PC-3 (cell line): ENCODE measurements at regions of chr2 and their contacts with region 1.

Region 1: DNA sequence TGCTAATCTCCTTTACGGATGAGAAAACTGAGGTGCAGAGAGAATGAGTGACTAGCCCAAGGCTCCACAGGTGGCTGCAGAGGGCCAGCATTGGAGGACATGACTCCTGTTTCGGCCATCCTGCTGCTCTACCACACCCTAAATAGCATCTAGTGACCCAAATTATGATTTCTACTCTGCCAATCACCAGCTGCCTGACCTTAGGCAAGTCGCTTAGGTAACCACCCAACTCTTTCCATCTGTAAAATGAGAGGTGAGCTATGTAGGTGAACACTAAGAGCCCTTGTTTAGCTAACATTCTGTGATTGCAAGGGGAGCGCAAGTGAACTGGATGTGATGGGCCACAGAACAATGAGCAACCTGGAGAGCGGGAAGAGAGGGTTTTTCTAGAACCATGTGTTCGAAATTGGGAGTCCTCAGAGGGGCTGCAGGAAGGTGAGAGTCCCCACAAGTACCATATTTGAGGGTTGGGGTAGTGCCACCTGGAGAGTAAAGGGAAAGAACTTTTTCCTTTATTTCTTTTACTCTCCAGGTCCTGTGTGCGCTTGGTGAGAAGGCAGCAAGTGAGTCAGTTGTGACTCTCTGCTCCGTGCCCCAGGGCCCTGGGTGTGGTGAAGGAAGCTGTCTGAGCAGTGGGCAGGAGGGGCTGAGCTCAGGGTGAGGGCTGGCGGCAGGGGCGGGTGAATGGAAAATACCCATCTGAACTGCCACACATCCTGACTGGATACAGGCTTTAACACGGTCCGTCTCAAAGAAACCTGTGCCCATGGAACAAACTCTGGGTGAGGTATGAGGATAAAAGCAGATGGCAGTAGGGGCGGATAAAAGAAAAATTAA is 2.4 kb downstream of the CYP27C1 start:
- DNase-seq: peak; percentile 95
- ATAC-seq: peak; percentile 96
- H3K4me3 ChIP-seq: peak overlapping the region; percentile 69
- H3K27ac ChIP-seq: peak overlapping the region; percentile 99
- H3K4me1 ChIP-seq: peaks cover 32% of the 10 kb centered on the region
- H3K27me3 ChIP-seq: no peaks in the 10 kb centered on the region
- CTCF ChIP-seq: no peak

Region 2: DNA sequence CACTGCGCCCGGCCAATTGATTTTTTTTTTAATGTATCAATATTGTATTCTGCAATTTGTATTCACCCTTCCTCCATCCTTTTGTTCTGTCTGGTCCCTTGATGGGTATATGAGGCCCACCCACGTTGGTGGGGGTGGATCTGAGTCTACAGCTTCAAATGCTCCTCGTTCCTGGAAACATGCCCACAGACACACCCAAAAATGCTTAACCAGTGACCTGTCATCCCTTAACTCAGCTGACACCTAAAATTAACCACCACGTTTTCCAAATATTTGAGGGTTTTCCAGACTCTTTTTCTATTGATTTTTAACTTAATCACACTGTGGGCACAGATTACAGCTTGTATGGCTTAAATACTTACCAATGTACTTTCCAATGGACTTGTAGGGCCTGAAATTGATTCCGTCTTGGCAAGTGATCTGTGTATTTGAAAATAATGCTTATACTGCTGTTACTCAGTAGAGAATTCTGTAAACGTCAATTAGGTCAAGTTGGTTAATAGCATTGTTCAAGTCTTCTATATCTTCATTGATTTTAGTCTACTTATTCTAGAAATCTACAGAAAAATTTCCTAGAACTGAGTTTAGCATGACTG is 36.8 kb after region 1 on chr2:
- CTCF ChIA-PET with region 1: no interaction called
- POLR2A ChIA-PET with region 1: interaction called, 13 read pairs
- intact Hi-C with region 1: no loop called
- DNase-seq: peak; percentile 55
- ATAC-seq: no peak
- H3K4me3 ChIP-seq: no peak overlapping the region
- H3K27ac ChIP-seq: no peak overlapping the region
- H3K4me1 ChIP-seq: peaks cover 13% of the 10 kb centered on the region
- H3K27me3 ChIP-seq: no peaks in the 10 kb centered on the region
- CTCF ChIP-seq: no peak